G401 (cell line): ENCODE measurements at regions of chr17 and their contacts with region 1.

Region 1: DNA sequence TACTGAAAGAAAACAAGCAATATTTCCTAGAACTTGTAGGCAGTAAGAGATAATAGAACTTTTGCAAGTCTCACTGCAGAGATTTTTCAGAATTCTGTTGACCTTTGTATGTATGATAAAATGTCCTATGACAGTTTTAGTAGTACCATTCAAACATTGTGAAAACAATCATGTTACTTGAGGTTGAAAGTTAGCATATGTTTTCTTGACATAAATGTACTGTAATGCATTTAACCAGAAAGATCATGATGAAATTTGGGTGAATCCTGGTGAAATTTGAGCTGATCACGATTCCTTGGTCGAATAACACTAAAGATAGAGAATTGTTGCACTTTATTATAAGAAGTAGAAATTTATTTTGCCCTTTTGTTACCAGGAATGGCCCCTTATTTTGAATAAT is 85.7 kb downstream of the TAOK1 start:
- DNase-seq: no peak

Region 2: DNA sequence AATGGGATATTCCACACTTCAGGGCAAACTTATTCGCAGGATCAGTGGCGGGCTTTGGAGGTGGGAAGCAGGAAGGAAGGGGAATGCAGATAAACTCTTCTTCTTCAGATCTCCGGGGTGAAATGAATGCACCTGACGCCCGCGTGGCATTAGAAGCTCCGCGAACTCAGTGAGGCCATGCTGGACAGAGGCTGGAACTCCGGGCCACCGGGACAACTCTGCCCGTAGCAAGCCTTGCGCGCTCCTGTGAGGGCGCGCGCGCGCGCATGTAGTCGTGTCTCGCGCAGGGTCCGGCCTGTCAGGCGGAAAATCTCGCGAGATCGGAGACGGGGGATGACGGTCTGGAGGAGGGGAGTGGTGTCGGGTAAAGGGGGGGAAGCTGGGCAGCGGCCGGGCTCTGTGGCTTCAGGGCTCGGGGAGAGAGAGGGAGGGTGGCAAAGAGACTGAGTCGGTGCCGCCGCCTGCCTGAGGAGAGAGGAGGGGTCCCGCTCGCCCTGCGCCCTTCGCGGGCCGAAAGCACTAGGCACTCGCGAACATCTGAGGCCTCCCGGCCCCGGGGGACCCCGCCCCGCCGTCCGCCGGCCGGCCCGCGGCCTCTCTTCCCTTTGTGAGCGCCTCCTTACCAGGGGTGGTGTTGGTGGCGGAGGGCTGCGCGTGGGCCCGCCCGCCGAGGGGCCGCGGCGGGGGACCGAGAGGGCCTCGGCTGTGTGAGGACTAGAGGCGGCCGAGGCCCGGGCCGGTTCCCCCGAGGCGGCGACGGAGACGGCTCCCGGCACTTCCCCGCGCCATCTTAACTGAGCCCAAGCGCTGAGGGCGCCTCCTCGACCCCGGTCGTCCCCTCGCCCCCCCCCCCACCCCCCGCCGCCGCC is 85.7 kb before region 1 on chr17 and contains the start of gene TAOK1:
- in situ Hi-C with region 1: loop called (anchors 10 kb)
- DNase-seq: peak; percentile 98
- total RNA-seq, gene TAOK1: 31.1 and 38.5 TPM in 2 replicates

Region 3: GRCh38 chr17:29401258-29401657 is 74.6 kb before region 1 on chr17:
- in situ Hi-C with region 1: no loop called
- DNase-seq: no peak

Region 4: GRCh38 chr17:29524460-29525091 is 48.7 kb after region 1 on chr17:
- in situ Hi-C with region 1: loop called (anchors 5 kb)
- DNase-seq: no peak